Calu3 (cell line): ENCODE measurements at regions of chr17 and their contacts with region 1.

Region 1: DNA sequence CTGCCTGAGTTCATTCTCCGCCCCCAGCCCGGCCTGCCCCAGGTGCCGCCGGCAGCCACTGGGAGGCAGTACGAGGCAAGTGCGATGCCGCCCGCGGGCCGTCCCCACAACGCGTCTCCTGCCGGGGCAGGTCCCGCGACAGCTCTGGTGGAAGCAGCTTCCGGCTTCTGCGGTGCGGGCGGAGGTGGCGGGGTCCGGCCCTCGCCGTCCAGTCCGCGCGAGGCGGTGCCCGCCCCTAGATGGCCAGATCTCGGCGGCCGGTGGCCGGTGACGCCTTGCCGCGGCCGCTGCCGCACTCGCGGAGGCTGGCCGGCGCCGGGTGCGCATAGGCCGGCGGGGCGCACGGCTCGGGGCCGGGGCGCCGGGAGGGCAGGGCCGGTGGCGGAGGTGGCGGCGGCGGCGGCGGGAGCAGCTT is 1.8 kb downstream of the GJD3 start:
- DNase-seq: peak; percentile 100
- H3K4me3 Mint-ChIP-seq: peak overlapping the region; percentile 81
- H3K27ac Mint-ChIP-seq: no peak overlapping the region
- H3K4me1 Mint-ChIP-seq: peaks cover 39% of the 10 kb centered on the region
- H3K27me3 Mint-ChIP-seq: peaks cover 9% of the 10 kb centered on the region
- CTCF ChIP-seq: no peak

Region 2: GRCh38 chr17:39894681-39895376 is 467.9 kb before region 1 on chr17:
- CTCF ChIA-PET with region 1: interaction called, 12 read pairs
- intact Hi-C with region 1: no loop called
- DNase-seq: peak; percentile 63
- H3K4me3 Mint-ChIP-seq: no peak overlapping the region
- H3K27ac Mint-ChIP-seq: no peak overlapping the region
- H3K4me1 Mint-ChIP-seq: peaks cover 23% of the 10 kb centered on the region
- H3K27me3 Mint-ChIP-seq: peaks cover 15% of the 10 kb centered on the region
- CTCF ChIP-seq: no peak

Region 3: GRCh38 chr17:40340880-40341807 is 21.6 kb before region 1 on chr17:
- CTCF ChIA-PET with region 1: interaction called, 1,520 read pairs
- intact Hi-C with region 1: no loop called
- DNase-seq: peak; percentile 100
- H3K4me3 Mint-ChIP-seq: peak overlapping the region; percentile 89
- H3K27ac Mint-ChIP-seq: peak overlapping the region; percentile 75
- H3K4me1 Mint-ChIP-seq: peaks cover 57% of the 10 kb centered on the region
- H3K27me3 Mint-ChIP-seq: no peaks in the 10 kb centered on the region
- CTCF ChIP-seq: peak; percentile 92

Region 4: GRCh38 chr17:40480501-40481003 is 117.8 kb after region 1 on chr17:
- CTCF ChIA-PET with region 1: interaction called, 22 read pairs
- intact Hi-C with region 1: loop called (anchors 5 kb)
- DNase-seq: peak; percentile 91
- H3K4me3 Mint-ChIP-seq: no peak overlapping the region
- H3K27ac Mint-ChIP-seq: no peak overlapping the region
- H3K4me1 Mint-ChIP-seq: peaks cover 25% of the 10 kb centered on the region
- H3K27me3 Mint-ChIP-seq: peaks cover 36% of the 10 kb centered on the region
- CTCF ChIP-seq: no peak

Region 5: DNA sequence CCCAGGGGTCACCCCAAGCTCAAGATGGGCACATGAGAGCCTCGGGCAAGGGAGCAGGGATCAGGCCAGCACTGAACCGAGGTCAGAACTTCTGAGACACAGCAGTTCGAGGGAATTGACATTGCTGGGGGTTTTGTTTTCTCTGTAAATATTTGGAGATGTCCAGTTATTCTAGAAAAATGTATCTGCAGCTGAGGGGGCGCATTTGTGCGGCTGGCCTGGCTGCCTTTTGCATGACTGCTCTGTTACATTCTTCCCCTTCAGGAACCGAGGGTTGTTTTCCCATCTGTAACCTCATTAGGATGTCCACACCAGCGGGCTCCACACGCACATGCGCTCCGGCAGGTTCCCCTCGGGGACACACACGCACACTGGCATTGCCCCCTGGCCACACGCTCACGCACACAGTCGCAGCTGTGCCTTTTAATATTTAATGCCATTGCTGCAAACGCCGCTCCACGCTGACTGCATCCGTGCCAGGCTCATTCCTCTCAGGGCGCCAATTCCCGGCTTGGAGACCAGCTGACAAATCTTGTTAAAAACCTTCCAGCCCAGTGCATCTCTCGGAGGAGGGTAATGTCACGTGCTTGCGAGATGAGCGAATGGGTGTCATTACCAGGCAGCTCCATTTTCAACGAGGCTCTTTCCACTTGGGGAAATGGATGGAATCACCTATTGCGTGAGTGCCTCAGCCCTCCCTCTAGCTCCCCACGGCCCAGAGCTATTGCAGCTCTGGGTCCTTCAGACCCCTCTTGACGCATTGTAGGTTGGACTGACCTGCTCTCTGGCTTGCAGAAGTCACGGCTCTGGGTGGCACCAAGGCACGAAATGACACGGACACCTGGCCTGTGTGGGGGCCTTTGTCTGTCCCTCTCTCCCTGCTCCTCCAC is 189.4 kb after region 1 on chr17:
- CTCF ChIA-PET with region 1: interaction called, 117 read pairs
- intact Hi-C with region 1: loop called (anchors 1 kb)
- DNase-seq: no peak
- H3K4me3 Mint-ChIP-seq: no peak overlapping the region
- H3K27ac Mint-ChIP-seq: no peak overlapping the region
- H3K4me1 Mint-ChIP-seq: peaks cover 20% of the 10 kb centered on the region
- H3K27me3 Mint-ChIP-seq: peaks cover 60% of the 10 kb centered on the region
- CTCF ChIP-seq: no peak

Region 6: DNA sequence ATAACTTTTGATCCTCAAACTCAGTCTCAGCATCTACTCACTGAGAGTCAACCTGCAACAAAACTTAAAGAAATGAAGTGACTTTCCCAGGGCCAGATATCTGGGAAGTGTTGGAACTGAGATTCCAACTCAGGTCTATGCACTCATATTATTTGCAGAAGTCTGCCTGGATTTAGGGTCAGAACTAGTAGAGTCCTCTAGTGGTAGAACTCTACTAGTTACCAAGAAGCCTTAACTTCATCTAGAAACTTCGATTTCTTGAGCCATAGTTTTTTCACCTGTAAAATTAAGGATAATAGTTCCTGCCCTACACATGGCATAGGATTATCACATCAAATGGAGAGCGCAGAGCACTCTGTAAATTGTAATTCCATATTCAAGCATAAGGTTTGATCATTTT is 364.2 kb after region 1 on chr17:
- CTCF ChIA-PET with region 1: no interaction called
- intact Hi-C with region 1: loop called (anchors 1 kb)
- DNase-seq: peak; percentile 45
- H3K4me3 Mint-ChIP-seq: no peak overlapping the region
- H3K27ac Mint-ChIP-seq: no peak overlapping the region
- H3K4me1 Mint-ChIP-seq: peaks cover 19% of the 10 kb centered on the region
- H3K27me3 Mint-ChIP-seq: peaks cover 54% of the 10 kb centered on the region
- CTCF ChIP-seq: no peak

Region 7: DNA sequence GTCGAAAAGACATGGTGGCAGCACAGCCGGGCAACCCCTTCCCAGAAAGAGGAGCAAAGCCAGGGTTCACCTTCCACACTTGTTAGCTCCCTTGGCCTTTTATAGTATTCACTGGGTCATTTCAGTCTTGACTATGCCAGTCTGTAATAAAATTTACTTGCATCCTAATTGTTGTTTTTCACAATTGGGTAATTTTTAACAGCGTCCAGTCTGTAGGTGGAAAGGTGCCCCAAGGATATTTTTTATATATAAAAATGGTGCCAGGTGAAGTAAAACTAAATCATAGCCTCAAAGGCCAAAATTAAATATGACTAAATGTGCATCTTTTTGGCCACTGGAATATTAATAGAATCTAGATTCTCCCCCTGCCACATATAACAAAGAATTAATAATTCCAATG is 409.4 kb after region 1 on chr17 and contains the start of gene KRT26:
- CTCF ChIA-PET with region 1: no interaction called
- intact Hi-C with region 1: no loop called
- DNase-seq: no peak
- H3K4me3 Mint-ChIP-seq: no peak within 1 kb of the TSS
- H3K27ac Mint-ChIP-seq: no peak within 1 kb of the TSS
- H3K4me1 Mint-ChIP-seq: no peaks in the 10 kb centered on the region
- H3K27me3 Mint-ChIP-seq: peaks cover 75% of the 10 kb centered on the region
- CTCF ChIP-seq: no peak
- total RNA-seq, gene KRT26: not detected in 2 replicates